PC-9 (cell line): ENCODE measurements at regions of chr6 and their contacts with region 1.

Region 1: GRCh38 chr6:137313928-137314855 is 95.0 kb upstream of the IFNGR1 start:
- DNase-seq: peak; percentile 23 to 57
- H3K4me3 ChIP-seq: no peak overlapping the region
- H3K27ac ChIP-seq: no peak overlapping the region
- H3K4me1 ChIP-seq: peaks cover 11% of the 10 kb centered on the region
- H3K27me3 ChIP-seq: no peaks in the 10 kb centered on the region
- CTCF ChIP-seq: peak; percentile 99

Region 2: DNA sequence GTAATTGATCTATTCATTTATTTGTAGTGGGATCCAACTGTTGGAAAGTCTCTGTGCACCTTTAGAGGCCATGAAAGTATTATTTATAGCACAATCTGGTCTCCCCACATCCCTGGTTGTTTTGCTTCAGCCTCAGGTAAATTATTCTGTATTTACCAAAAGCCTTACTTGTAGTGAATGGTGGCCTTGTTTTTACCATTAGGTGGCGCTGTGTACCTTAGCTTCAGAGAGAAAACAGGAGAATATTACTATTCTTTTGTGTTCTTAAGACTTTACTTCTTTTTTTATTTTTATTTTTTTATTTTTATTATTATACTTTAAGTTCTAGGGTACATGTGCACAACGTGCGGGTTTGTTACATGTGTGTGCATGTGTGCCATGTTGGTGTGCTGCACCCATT is 468.1 kb before region 1 on chr6:
- CTCF ChIA-PET with region 1: no interaction called
- POLR2A ChIA-PET with region 1: no interaction called
- intact Hi-C with region 1: loop called (anchors 10 kb)
- DNase-seq: peak; percentile 12 to 50
- H3K4me3 ChIP-seq: no peak overlapping the region
- H3K27ac ChIP-seq: no peak overlapping the region
- H3K4me1 ChIP-seq: no peaks in the 10 kb centered on the region
- H3K27me3 ChIP-seq: no peaks in the 10 kb centered on the region
- CTCF ChIP-seq: peak; percentile 89

Region 3: GRCh38 chr6:136967876-136968752 is 346.1 kb before region 1 on chr6:
- CTCF ChIA-PET with region 1: no interaction called
- POLR2A ChIA-PET with region 1: no interaction called
- intact Hi-C with region 1: loop called (anchors 2 kb)
- DNase-seq: peak; percentile 68 to 80
- H3K4me3 ChIP-seq: no peak overlapping the region
- H3K27ac ChIP-seq: peak overlapping the region; percentile 97
- H3K4me1 ChIP-seq: peaks cover 37% of the 10 kb centered on the region
- H3K27me3 ChIP-seq: no peaks in the 10 kb centered on the region
- CTCF ChIP-seq: peak; percentile 90

Region 4: DNA sequence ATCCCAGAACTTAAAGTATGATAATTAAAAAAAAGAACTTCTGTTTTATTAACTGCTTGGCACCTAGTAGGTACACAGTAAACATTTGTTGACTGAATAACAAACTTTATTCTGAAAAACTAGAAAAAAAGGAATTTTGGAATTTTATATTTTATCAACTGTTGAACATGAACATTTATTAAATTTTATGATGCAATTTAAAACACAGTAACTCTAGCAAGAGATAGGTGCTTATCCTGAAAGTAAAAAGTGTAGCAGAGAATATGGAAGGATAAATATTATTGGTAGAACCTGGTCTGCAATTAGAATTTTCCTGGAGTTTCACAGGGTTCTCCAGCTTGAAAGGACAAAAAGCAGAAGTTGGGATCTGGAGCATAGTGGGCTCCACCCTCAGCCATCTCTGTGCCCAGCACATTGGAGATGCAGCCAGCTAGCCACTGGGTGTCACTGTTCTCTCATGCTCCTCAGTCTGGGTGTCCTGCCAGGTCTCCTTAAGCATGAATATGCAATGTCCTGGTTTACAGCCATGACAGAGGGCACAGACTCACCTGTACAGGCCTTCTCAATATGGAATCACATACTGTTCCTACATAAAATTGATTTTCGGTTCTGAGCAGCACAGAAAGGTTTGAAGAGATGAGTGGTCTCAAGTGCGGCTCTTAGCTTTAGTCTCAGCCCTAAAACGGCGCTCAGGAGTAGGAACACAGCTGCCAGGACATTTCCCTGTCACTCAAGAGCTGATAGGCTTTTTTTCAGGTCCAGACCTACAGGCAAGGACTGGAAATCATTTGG is 237.7 kb before region 1 on chr6:
- CTCF ChIA-PET with region 1: interaction called, 3 read pairs
- POLR2A ChIA-PET with region 1: no interaction called
- intact Hi-C with region 1: loop called (anchors 1 kb)
- DNase-seq: peak; percentile 65 to 76
- H3K4me3 ChIP-seq: no peak overlapping the region
- H3K27ac ChIP-seq: no peak overlapping the region
- H3K4me1 ChIP-seq: no peaks in the 10 kb centered on the region
- H3K27me3 ChIP-seq: no peaks in the 10 kb centered on the region
- CTCF ChIP-seq: peak; percentile 91

Region 5: GRCh38 chr6:137094411-137095008 is 219.7 kb before region 1 on chr6:
- CTCF ChIA-PET with region 1: interaction called, 21 read pairs
- POLR2A ChIA-PET with region 1: no interaction called
- intact Hi-C with region 1: loop called (anchors 1 kb)
- DNase-seq: peak; percentile 53 to 82
- H3K4me3 ChIP-seq: no peak overlapping the region
- H3K27ac ChIP-seq: no peak overlapping the region
- H3K4me1 ChIP-seq: peaks cover 5% of the 10 kb centered on the region
- H3K27me3 ChIP-seq: no peaks in the 10 kb centered on the region
- CTCF ChIP-seq: peak; percentile 92

Region 6: GRCh38 chr6:137271245-137272183 is 42.7 kb before region 1 on chr6:
- CTCF ChIA-PET with region 1: interaction called, 3 read pairs
- POLR2A ChIA-PET with region 1: no interaction called
- intact Hi-C with region 1: loop called (anchors 1 kb)
- DNase-seq: peak in 1 of 2 experiments; percentile 54
- H3K4me3 ChIP-seq: no peak overlapping the region
- H3K27ac ChIP-seq: no peak overlapping the region
- H3K4me1 ChIP-seq: no peaks in the 10 kb centered on the region
- H3K27me3 ChIP-seq: peaks cover 3% of the 10 kb centered on the region; the same call in 1 of the 2 replicates
- CTCF ChIP-seq: peak; percentile 98

Region 7: GRCh38 chr6:137277971-137278637 is 36.1 kb before region 1 on chr6:
- CTCF ChIA-PET with region 1: interaction called, 3 read pairs
- POLR2A ChIA-PET with region 1: interaction called, 3 read pairs
- intact Hi-C with region 1: loop called (anchors 2 kb)
- DNase-seq: peak; percentile 64 to 88
- H3K4me3 ChIP-seq: no peak overlapping the region
- H3K27ac ChIP-seq: peak overlapping the region; percentile 47
- H3K4me1 ChIP-seq: peaks cover 17% of the 10 kb centered on the region
- H3K27me3 ChIP-seq: no peaks in the 10 kb centered on the region
- CTCF ChIP-seq: no peak

Region 8: GRCh38 chr6:137297887-137298286 is 16.3 kb before region 1 on chr6:
- CTCF ChIA-PET with region 1: no interaction called
- POLR2A ChIA-PET with region 1: no interaction called
- intact Hi-C with region 1: no loop called
- DNase-seq: no peak
- H3K4me3 ChIP-seq: no peak overlapping the region
- H3K27ac ChIP-seq: no peak overlapping the region
- H3K4me1 ChIP-seq: no peaks in the 10 kb centered on the region
- H3K27me3 ChIP-seq: no peaks in the 10 kb centered on the region
- CTCF ChIP-seq: no peak

Region 9: DNA sequence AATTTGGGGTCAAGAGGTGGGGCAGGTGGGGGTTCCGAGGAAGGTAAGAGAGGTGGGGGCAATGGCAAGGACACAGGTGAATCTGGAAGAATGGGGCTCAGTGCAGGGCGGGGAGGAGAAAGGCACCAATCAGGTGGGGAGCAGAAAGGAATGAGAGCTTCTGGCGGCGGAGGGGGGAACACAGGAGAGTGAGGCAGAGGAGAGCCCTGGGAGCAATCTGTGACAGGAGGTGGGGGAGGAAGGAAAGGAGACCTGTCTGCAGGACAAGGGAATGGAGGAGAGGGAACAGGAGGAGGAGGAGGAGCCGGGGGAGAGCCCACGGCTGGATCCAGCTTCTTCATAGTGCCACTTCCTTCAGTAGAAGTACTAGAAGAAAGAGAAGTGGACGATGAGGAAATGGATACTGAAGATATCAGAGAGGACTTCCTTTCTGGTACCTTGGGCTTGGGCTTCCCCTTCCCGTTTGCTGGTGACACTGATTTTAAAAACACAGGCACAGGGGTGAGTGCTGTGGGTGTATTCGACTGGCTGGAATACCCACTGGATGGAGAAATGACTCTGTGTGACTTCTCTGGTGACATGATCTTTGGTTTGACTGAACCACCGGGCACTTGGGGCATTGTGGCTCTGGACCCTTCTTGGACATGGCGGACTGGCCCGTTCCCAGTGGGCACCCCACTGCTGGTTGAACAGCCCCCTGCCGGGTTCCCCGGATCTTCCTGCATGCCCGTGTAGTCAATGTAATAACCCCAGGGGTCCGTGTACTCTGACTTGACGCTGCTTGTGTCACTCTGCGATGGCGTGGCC is 1117.3 kb after region 1 on chr6:
- CTCF ChIA-PET with region 1: no interaction called
- POLR2A ChIA-PET with region 1: no interaction called
- intact Hi-C with region 1: no loop called
- DNase-seq: no peak
- H3K4me3 ChIP-seq: no peak overlapping the region
- H3K27ac ChIP-seq: no peak overlapping the region
- H3K4me1 ChIP-seq: no peaks in the 10 kb centered on the region
- H3K27me3 ChIP-seq: no peaks in the 10 kb centered on the region
- CTCF ChIP-seq: no peak